Pancreas (tissue), 10 donors: ENCODE measurements at regions of chr2 and their contacts with region 1.

Region 1: GRCh38 chr2:16470936-16471490 is 194.6 kb downstream of the CYRIA start:
- DNase-seq: no peak
- ATAC-seq: no peak
- H3K4me3 ChIP-seq: no peak overlapping the region
- H3K27ac ChIP-seq: no peak overlapping the region
- H3K4me1 ChIP-seq: no peaks in the 10 kb centered on the region
- H3K27me3 ChIP-seq: no peaks in the 10 kb centered on the region
- CTCF ChIP-seq: no peak

Region 2: DNA sequence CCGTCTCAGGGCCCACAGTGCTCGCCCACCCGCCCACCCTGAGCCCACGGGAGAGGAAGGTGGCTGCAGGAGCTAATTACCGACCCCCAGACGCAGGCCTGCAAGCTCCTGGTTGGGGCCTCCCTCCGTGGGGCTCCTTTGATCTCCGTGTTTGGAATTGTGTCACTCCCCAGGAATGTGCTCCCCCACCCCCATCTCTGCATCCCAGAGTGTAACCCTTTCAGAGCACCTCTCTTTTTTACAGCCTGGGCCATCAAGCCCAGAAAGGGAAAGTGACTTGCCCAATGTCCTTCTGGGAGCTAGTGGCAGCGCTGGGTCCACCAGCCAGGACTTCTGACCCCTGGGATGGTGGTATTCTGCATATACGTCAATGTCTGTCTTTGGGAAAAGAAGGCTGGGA is 140.4 kb before region 1 on chr2:
- intact Hi-C with region 1: no loop called
- DNase-seq: no peak
- ATAC-seq: no peak
- H3K4me3 ChIP-seq: no peak overlapping the region
- H3K27ac ChIP-seq: no peak overlapping the region
- H3K4me1 ChIP-seq: no peaks in the 10 kb centered on the region
- H3K27me3 ChIP-seq: no peaks in the 10 kb centered on the region
- CTCF ChIP-seq: no peak

Region 3: GRCh38 chr2:16400127-16400623 is 70.8 kb before region 1 on chr2:
- intact Hi-C with region 1: loop called in 1 of 3 experiments (anchors 5 kb)
- DNase-seq: peak in 1 of 6 donors; percentile 39
- ATAC-seq: peak in 3 of 4 donors; percentile 17 to 65 (median 65)
- H3K4me3 ChIP-seq: no peak overlapping the region
- H3K27ac ChIP-seq: no peak overlapping the region
- H3K4me1 ChIP-seq: no peaks in the 10 kb centered on the region
- H3K27me3 ChIP-seq: no peaks in the 10 kb centered on the region
- CTCF ChIP-seq: no peak

Region 4: GRCh38 chr2:16568998-16569784 is 98.2 kb after region 1 on chr2:
- intact Hi-C with region 1: no loop called
- DNase-seq: no peak
- ATAC-seq: no peak
- H3K4me3 ChIP-seq: no peak overlapping the region
- H3K27ac ChIP-seq: no peak overlapping the region
- H3K4me1 ChIP-seq: no peaks in the 10 kb centered on the region
- H3K27me3 ChIP-seq: no peaks in the 10 kb centered on the region
- CTCF ChIP-seq: no peak